Activated T-helper 1 cell treated with anti-CD3 and anti-CD28 coated beads, Interleukin-12 subunit alpha, Interleukin-12 subunit beta, Interleukin-2, Interleukin-4 antibody, amounts not matched to agents 30 ng/mL and 10 ng/mL and 1 ng/mL, durations not matched to agents 14 hours and 24 hours and 36 hours (primary cell): ENCODE measurements at regions of chr17 and their contacts with region 1.

Region 1: GRCh38 chr17:43170766-43171585 is at the start of gene NBR1:
- DNase-seq: peak; percentile 96
- H3K4me3 Mint-ChIP-seq: no peak within 1 kb of the TSS
- H3K27ac Mint-ChIP-seq: no peak within 1 kb of the TSS
- H3K4me1 Mint-ChIP-seq: peaks cover 26% of the 10 kb centered on the region
- H3K27me3 Mint-ChIP-seq: no peaks in the 10 kb centered on the region
- total RNA-seq, gene NBR1: 53.4 and 56.1 TPM in 2 replicates

Region 2: DNA sequence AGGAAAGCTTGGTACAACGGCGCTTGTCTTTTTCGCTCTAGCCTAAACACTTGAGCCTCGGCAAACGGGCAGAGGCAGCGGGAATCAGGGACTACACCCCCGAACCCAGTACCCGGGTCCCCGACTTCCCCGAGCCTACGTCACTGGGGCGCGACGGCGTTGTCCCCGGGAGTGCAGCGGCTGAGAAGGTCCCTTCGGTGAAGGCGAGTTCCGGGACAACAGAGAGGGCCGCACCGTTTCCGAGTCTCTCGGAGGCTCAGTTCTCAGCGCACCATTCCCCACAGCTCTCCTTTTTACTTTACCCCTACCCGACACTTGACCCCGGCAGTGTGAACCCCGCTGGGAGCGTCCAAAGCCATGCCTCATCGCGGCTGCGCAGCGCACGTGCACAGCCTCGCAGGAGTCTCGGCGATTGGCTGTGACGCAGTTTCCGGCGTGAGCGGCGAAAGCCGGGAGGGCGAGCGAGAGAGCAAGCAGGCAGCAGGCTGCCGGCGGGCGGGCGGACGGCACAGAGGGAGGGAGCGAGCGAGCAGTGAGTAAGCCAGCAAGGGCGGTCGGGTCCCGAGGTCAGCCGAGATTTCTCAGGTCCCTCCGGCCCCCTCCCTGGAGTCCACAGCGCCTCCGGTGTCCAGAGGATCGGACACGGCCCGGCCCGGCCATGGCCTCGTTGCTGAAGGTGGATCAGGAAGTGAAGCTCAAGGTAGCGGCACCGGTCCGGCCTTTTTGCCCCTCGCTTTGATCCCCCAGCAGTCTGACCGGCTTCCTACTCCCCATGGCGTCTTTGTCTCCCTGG is 337.8 kb before region 1 on chr17 and contains the start of gene PSME3:
- intact Hi-C with region 1: loop called (anchors 1 kb)
- DNase-seq: peak; percentile 88
- H3K4me3 Mint-ChIP-seq: peak within 1 kb of the TSS; percentile 90
- H3K27ac Mint-ChIP-seq: peak within 1 kb of the TSS; percentile 93
- H3K4me1 Mint-ChIP-seq: peaks cover 23% of the 10 kb centered on the region
- H3K27me3 Mint-ChIP-seq: peaks cover 3% of the 10 kb centered on the region
- total RNA-seq, gene PSME3: 217 and 220 TPM in 2 replicates

Region 3: GRCh38 chr17:43024407-43025289 is 146.3 kb before region 1 on chr17 and contains the start of gene RND2:
- intact Hi-C with region 1: loop called (anchors 1 kb)
- DNase-seq: peak; percentile 73
- H3K4me3 Mint-ChIP-seq: peak within 1 kb of the TSS; percentile 90
- H3K27ac Mint-ChIP-seq: peak within 1 kb of the TSS; percentile 84
- H3K4me1 Mint-ChIP-seq: peaks cover 16% of the 10 kb centered on the region
- H3K27me3 Mint-ChIP-seq: peaks cover 25% of the 10 kb centered on the region
- total RNA-seq, gene RND2: 0.07 TPM in 1 of 2 replicates, not detected in the other

Region 4: GRCh38 chr17:43183921-43184320 is 12.9 kb after region 1 on chr17:
- intact Hi-C with region 1: no loop called
- DNase-seq: no peak
- H3K4me3 Mint-ChIP-seq: no peak overlapping the region
- H3K27ac Mint-ChIP-seq: no peak overlapping the region
- H3K4me1 Mint-ChIP-seq: no peaks in the 10 kb centered on the region
- H3K27me3 Mint-ChIP-seq: no peaks in the 10 kb centered on the region

Region 5: GRCh38 chr17:43211480-43212402 is 40.8 kb after region 1 on chr17 and contains the start of gene TMEM106A:
- intact Hi-C with region 1: loop called (anchors 1 kb)
- DNase-seq: peak; percentile 60
- H3K4me3 Mint-ChIP-seq: peak within 1 kb of the TSS; percentile 97
- H3K27ac Mint-ChIP-seq: peak within 1 kb of the TSS; percentile 90
- H3K4me1 Mint-ChIP-seq: peaks cover 35% of the 10 kb centered on the region
- H3K27me3 Mint-ChIP-seq: no peaks in the 10 kb centered on the region
- total RNA-seq, gene TMEM106A: 18.2 and 19.1 TPM in 2 replicates

Region 6: DNA sequence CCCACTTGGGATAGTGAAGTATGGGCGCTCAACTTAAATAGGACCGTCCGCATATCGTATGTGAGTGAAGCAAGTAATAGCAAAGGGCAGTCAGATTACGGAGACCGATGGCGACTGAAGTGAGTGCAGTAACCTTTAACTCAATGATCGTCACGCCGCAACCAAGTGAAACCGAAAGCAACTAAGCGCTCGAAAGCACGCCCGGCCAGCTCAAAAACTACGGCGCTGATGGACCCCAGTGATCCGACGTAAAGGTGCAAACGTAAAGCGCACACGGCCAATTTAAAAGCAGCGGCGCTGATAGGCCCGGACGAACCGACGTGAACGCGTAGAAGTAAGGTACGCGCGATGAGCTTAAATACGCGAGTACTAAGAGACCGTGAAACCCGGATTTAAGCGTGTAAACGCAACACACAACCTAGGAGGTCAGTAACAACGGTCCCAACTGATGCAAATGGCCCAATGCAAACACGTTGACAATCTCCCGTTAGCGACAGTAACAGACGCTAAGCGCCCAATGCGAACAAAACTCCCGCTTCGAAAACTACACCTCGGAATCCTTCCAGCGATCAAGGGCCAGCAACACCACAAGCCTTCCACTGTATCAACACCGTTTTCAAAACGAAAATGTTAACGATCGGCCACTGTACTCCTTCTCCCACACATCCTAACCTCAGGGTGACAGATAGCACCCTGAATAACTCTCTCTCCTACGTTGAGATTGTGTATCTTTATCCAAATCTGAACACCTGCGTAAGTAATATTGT is 189.9 kb after region 1 on chr17:
- intact Hi-C with region 1: loop called (anchors 1 kb)
- DNase-seq: peak; percentile 92
- H3K4me3 Mint-ChIP-seq: peak overlapping the region; percentile 85
- H3K27ac Mint-ChIP-seq: peak overlapping the region; percentile 100
- H3K4me1 Mint-ChIP-seq: peaks cover 40% of the 10 kb centered on the region
- H3K27me3 Mint-ChIP-seq: no peaks in the 10 kb centered on the region

Region 7: DNA sequence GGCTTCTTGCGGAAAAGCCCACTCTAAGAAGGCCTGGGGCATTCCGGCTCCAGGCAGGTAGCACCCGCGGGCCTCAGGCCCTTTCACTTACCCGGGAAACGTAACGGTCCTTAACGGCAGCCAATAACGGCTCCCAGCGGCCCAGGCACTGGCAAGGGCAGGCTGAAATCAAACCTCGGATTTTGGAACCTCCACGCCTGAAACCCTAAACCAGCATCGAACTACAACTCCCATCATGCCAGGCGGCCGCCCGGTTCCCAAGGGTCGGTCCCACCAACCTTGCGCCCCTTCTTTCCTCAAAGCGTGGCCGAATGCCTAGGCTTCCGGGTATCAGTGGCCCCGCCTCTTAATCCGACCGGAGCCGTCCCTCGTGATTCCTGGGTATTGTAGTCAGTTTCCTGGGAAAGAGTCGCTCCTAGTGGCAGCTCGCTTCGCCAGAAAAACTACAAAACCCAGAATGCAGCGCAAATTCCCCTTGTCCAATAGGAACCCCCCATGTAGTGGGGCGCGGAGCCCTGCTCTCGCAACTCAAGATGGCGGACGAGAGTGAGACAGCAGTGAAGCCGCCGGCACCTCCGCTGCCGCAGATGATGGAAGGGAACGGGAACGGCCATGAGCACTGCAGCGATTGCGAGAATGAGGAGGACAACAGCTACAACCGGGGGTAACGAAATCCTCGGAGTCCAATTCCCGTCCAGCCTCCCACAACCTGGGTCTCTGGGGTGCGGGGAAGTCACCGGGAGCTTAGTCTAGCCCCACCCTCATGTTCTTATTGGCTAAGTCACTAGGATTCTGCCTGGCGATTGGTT is 1890.0 kb after region 1 on chr17 and contains the start of gene NMT1:
- intact Hi-C with region 1: loop called (anchors 2 kb)
- DNase-seq: peak; percentile 96
- H3K4me3 Mint-ChIP-seq: peak within 1 kb of the TSS; percentile 92
- H3K27ac Mint-ChIP-seq: peak within 1 kb of the TSS; percentile 100
- H3K4me1 Mint-ChIP-seq: peaks cover 25% of the 10 kb centered on the region
- H3K27me3 Mint-ChIP-seq: peaks cover 2% of the 10 kb centered on the region
- total RNA-seq, gene NMT1: 168 and 173 TPM in 2 replicates